AG04450 (cell line): ENCODE measurements at regions of chr17 and their contacts with region 1.

Region 1: GRCh38 chr17:4908301-4908700 is 5.4 kb upstream of the CHRNE start:
- DNase-seq: no peak
- H3K4me3 ChIP-seq: no peak overlapping the region
- H3K27ac ChIP-seq: no peak overlapping the region
- H3K27me3 ChIP-seq: peaks cover 3% of the 10 kb centered on the region
- CTCF ChIP-seq: no peak

Region 2: GRCh38 chr17:4849011-4849536 is 59.2 kb before region 1 on chr17:
- CTCF ChIA-PET with region 1: no interaction called
- POLR2A ChIA-PET with region 1: no interaction called
- DNase-seq: no peak
- H3K4me3 ChIP-seq: no peak overlapping the region
- H3K27ac ChIP-seq: no peak overlapping the region
- H3K27me3 ChIP-seq: no peaks in the 10 kb centered on the region
- CTCF ChIP-seq: no peak

Region 3: GRCh38 chr17:4920351-4921048 is 12.2 kb after region 1 on chr17:
- CTCF ChIA-PET with region 1: interaction called, 17 read pairs
- POLR2A ChIA-PET with region 1: interaction called, 4 read pairs
- DNase-seq: no peak
- H3K4me3 ChIP-seq: no peak overlapping the region
- H3K27ac ChIP-seq: no peak overlapping the region
- H3K27me3 ChIP-seq: no peaks in the 10 kb centered on the region
- CTCF ChIP-seq: no peak

Region 4: DNA sequence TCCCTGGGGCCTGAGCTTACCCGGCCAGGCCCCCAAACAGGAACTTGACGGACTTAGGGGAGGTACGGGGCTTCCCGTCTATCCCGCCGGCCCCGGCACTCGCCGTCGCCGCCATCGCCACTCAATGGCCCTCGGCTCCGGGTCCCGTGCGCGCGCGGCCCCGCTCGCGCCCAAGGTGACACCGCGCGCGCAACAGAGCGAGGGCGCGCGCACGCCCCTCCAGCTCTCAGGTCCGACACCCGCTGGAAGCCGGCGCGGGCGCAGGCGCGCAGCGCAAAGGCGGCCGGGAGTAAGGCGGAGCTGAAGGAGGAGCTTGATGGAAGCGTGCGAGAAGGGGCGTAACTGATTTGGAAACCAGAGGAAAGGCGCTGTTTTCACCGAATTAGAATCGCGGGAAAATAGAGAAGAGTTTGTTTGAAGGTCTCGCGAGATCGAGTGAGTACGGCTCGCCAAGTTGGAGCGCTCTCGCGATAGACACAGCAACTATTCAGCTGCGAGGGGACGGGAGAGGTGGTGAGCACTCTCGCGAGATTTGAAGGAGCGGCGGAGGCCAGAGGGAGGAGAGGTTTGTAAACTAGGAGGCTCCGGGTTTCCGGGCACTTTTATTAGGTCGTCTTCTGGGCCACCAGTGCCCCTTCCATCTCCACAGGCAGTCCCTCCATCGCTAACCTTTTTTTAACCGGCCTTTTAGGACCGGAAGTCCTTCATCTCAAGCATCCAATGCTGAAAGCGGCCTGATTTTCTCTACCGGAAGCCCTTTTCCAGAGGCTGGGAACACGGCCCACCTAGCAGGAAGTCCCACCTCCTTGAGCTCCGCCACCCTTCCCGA is 31.7 kb after region 1 on chr17 and contains the starts of genes RNF167 and SLC25A11:
- CTCF ChIA-PET with region 1: interaction called, 25 read pairs
- POLR2A ChIA-PET with region 1: interaction called, 14 read pairs
- DNase-seq: peak; percentile 99
- H3K4me3 ChIP-seq: peak within 1 kb of the TSS; percentile 92
- H3K27ac ChIP-seq: peak within 1 kb of the TSS; percentile 98
- H3K27me3 ChIP-seq: no peaks in the 10 kb centered on the region
- CTCF ChIP-seq: no peak
- polyA plus RNA-seq, gene RNF167: 63.1 and 64.3 TPM in 2 replicates
- polyA plus RNA-seq, gene SLC25A11: 44.7 and 50.0 TPM in 2 replicates

Region 5: GRCh38 chr17:5065227-5065744 is 157.0 kb after region 1 on chr17:
- CTCF ChIA-PET with region 1: interaction called, 15 read pairs
- POLR2A ChIA-PET with region 1: no interaction called
- DNase-seq: no peak
- H3K4me3 ChIP-seq: no peak overlapping the region
- H3K27ac ChIP-seq: no peak overlapping the region
- H3K27me3 ChIP-seq: peaks cover 5% of the 10 kb centered on the region
- CTCF ChIP-seq: no peak